A549 (cell line): ENCODE measurements at regions of chr20 and their contacts with region 1.

Region 1: DNA sequence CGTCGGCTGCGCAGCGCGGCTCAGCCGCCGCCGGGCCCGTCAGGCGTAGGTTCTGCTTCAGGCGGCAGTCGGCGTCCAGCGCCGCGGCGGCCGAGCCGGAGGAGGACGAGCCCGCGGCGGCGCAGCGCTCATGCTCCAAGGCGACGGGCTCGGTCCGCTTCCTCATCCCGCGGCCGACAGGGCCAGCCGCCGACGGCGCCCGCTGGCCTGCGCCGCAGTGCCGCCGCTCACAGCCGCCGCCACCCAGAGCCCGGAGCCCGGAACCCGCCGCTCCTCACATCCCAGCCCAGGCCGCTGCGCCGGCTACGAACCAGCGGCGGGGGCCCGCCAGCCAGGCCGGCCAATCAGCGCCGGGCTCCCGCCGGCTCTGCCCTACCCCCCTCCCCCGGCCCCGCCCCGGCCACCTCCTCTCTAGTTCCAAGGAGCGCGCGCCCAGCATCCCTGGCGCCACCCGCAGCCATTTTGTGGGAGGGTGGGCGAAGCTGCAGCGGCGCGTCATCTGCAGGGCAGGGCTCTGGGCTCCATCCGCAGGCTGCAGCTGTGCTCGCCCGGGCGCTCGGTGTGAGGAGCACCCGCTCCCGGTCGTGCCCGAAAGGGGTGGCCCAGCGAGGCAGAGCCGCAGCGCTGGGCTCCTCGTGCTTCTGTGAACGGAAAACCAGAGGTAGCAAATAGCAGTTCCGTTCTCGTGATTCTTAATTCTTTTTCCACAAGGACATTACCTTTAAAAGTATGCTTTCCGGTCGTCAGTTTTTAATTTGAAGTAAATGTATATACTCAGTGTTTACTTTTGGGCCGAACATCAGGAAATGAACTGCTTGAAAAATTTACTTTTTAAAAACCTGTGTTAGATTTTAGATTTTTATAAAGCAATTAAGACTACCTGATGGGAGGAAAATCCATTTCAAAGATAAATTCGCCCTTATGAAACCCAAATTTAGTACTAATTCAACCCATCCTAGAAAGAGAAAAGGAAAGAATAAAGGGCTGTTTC is at the start of gene ABHD12:
- DNase-seq: peak; percentile 96 to 97
- ATAC-seq: peak; percentile 95 to 98
- H3K4me3 ChIP-seq: peak within 1 kb of the TSS; percentile 95
- H3K27ac ChIP-seq: peak within 1 kb of the TSS; percentile 78 to 90
- H3K4me1 ChIP-seq: peaks cover 3% of the 10 kb centered on the region; the same call in 1 of the 3 replicates
- CTCF ChIP-seq: no peak
- EP300 ChIP-seq: no peak
- POLR2A ChIP-seq: peak; percentile 93
- RAD21 ChIP-seq: peak in 1 of 2 experiments; percentile 20; a peak in 1 of 5 replicates
- polyA plus RNA-seq, gene ABHD12: 54.3 and 59.1 TPM in 2 replicates

Region 2: GRCh38 chr20:25310268-25310920 is 80.4 kb before region 1 on chr20:
- CTCF ChIA-PET with region 1: interaction called, 91 read pairs
- POLR2A ChIA-PET with region 1: interaction called, 13 read pairs
- DNase-seq: peak; percentile 95 to 97
- ATAC-seq: peak; percentile 75 to 87
- H3K4me3 ChIP-seq: peak overlapping the region; percentile 26
- H3K27ac ChIP-seq: peak overlapping the region; percentile 97 to 98
- H3K4me1 ChIP-seq: peaks cover 71% of the 10 kb centered on the region
- CTCF ChIP-seq: peak; percentile 67
- EP300 ChIP-seq: peak; percentile 70 to 78; a peak in 2 of 5 replicates
- POLR2A ChIP-seq: no peak
- RAD21 ChIP-seq: peak; percentile 81 to 83

Region 3: DNA sequence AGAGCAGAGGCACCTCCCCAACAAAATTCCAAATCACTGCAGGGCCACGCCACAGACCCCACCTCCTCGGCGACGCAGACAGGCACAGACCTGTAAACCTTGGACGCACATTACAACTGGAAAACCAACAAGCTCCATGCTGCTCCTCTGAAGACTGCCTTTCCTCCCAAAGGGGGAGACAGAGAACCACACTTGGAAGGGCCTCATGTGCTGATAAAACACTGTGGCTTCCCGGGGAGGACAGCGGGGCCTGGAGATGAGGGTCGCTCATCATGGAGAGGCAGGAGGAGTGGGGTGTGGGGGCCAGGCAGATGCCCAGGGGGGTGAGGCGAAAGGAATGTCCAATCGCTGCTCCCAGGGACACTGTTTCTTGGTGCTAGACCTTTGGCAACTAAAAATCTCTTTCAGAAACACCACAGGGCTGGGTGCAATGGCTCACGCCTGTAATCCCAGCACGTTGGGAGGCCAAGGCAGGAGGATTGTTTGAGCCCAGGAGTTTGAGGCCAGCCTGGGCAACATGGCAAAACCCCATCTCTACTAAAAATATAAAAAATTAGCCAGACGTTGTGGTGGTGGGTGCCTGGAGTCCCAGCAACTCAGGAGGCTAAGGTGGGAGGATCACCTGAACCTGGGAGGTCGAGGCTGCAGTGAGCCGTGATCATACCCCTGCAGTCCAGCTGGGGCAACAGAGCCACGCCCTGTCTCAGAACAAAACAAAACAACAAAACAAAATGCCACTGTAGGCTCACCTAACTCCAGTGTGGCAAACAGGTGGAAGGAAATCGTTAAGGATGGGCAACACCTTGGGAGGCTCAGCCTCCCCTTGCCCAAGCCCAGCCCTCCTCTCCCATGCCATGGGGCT is 54.0 kb before region 1 on chr20:
- CTCF ChIA-PET with region 1: interaction called, 16 read pairs
- POLR2A ChIA-PET with region 1: interaction called, 7 read pairs
- DNase-seq: peak; percentile 33 to 71
- ATAC-seq: peak; percentile 94
- H3K4me3 ChIP-seq: no peak overlapping the region
- H3K27ac ChIP-seq: peak overlapping the region in 1 of 2 experiments; percentile 50; a peak in 2 of 6 replicates
- H3K4me1 ChIP-seq: peaks cover 24% of the 10 kb centered on the region; the same call in 2 of the 3 replicates
- CTCF ChIP-seq: peak; percentile 30
- EP300 ChIP-seq: no peak
- POLR2A ChIP-seq: no peak
- RAD21 ChIP-seq: peak; percentile 54 to 73

Region 4: GRCh38 chr20:25424536-25424935 is 33.7 kb after region 1 on chr20:
- CTCF ChIA-PET with region 1: no interaction called
- POLR2A ChIA-PET with region 1: no interaction called
- DNase-seq: no peak
- ATAC-seq: no peak
- H3K4me3 ChIP-seq: no peak overlapping the region
- H3K27ac ChIP-seq: no peak overlapping the region
- H3K4me1 ChIP-seq: no peaks in the 10 kb centered on the region
- CTCF ChIP-seq: no peak
- EP300 ChIP-seq: no peak
- POLR2A ChIP-seq: no peak
- RAD21 ChIP-seq: no peak

Region 5: DNA sequence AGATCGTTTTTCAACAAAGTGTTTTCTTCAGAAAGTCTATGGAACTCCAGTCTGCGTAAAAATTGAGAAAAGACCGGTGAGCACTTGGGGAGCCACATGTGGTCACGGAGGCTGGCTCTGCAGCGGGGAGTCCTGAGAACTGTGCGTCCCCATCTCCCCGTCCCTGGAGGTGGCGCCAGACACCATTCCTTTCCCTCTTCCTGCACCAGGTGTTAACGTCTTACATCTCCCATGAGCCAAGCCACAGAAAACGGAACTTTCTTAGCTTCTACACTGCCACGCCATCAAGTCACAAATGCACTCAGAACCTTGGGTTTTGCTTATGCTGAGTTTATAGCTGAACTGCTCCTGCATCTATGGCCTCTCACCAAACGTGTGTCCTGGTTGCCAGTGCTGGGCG is 79.2 kb after region 1 on chr20:
- CTCF ChIA-PET with region 1: no interaction called
- POLR2A ChIA-PET with region 1: no interaction called
- DNase-seq: peak in 1 of 2 experiments; percentile 60
- ATAC-seq: peak; percentile 67 to 84; a peak in 3 of 6 replicates
- H3K4me3 ChIP-seq: no peak overlapping the region
- H3K27ac ChIP-seq: no peak overlapping the region
- H3K4me1 ChIP-seq: no peaks in the 10 kb centered on the region
- CTCF ChIP-seq: peak; percentile 45
- EP300 ChIP-seq: no peak
- POLR2A ChIP-seq: no peak
- RAD21 ChIP-seq: peak; percentile 67 to 78